ENCODE measurements at regions of chr10 and their contacts with region 1.

Region 1: DNA sequence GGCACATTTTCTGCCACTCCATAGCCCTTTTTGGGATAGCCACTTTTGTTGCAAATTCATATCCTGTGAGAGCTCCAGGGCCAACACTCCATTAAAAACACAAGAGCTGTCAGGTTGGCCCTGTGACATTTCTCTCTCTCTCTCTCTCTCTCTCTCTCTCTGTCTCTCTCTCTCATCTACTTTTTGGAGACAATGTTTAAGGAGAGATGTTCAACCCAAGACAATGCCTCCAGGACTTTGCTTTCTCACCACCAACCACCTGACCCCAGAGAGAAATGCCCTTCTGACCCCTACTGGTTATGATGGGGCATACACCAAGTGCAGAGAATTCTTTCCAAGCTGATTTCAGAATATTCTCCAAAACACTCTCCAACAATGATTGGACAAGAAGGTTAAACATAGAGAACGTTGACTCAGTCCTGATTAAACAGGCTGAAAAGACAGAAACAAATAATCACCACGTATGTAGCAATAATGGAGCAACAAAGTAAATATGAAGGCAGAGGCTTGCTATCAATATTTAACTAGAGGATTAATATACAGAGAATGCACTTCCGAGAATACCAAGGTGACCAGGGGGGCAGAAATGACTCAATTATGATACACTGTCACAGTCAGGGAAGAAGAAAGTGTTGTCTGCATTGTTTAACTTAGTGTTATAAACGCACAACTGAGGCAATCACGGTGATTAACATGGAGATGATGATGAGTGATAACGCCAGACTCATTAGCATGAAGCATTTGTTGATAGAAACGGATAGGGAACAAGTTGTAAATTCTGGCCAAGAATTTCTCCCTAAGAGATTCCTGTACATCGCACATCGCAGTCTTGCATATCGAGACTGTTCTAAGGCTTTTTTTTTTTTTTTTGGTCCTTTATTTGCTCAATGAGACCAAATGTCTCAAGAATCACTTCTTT is 178.5 kb downstream of the NRP1 start:
- DNase-seq: peak; percentile 53
- H3K4me3 Mint-ChIP-seq: no peak overlapping the region
- H3K27ac Mint-ChIP-seq: no peak overlapping the region
- H3K4me1 Mint-ChIP-seq: peaks cover 42% of the 10 kb centered on the region
- H3K27me3 Mint-ChIP-seq: peaks cover 11% of the 10 kb centered on the region

Region 2: DNA sequence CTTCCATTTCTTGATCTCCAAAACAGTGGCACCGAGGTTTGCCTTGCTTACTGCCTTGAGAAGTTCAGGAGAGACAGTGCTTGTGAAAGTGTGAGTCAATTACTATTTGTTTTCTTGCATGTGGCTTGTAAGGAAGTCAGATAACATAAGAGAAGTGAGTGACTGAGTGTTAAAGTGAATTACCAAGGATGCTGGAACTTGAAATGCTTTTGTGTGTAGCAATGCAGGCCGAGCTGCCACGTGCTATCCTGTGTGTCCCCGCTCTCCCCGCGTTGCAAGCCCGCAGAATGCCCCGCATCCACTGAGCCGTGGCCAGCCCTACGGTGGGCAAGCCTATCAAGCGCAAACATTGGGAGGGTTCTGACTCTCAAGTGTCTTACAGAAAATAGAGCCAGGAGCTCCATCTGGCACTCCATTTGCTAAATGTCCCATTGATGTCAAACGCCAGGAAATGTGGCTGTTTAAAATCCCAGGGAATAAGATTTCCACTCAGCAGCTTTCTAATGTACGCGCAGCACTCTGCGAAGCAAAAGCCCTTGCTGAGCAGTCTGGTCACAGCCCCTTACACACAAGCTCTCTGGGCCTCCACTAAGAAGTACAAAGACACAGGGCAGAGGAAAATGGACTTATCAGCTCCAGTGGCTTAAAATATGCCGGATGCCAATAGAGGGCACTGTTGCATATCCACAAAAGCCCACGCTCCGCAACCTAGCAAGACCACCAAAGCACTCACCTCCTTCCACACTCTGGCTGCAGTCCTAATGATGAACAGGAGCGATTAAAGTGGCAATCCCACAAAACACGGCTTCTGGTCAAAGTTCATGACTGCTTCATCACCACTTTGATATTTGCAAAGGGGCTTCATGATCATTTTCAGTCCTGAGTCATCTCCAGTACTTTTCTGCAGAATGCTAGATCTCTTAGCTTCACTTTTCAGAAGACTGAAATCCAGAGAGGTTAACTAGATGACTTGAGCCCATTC is 40.0 kb before region 1 on chr10:
- CTCF ChIA-PET with region 1: interaction called, 13 read pairs
- DNase-seq: no peak
- H3K4me3 Mint-ChIP-seq: no peak overlapping the region
- H3K27ac Mint-ChIP-seq: peak overlapping the region; percentile 78
- H3K4me1 Mint-ChIP-seq: peaks cover 77% of the 10 kb centered on the region
- H3K27me3 Mint-ChIP-seq: no peaks in the 10 kb centered on the region

Region 3: GRCh38 chr10:33134011-33134751 is 21.8 kb before region 1 on chr10:
- CTCF ChIA-PET with region 1: interaction called, 18 read pairs
- DNase-seq: peak; percentile 62
- H3K4me3 Mint-ChIP-seq: no peak overlapping the region
- H3K27ac Mint-ChIP-seq: peak overlapping the region; percentile 77
- H3K4me1 Mint-ChIP-seq: peaks cover 69% of the 10 kb centered on the region
- H3K27me3 Mint-ChIP-seq: peaks cover 3% of the 10 kb centered on the region

Region 4: DNA sequence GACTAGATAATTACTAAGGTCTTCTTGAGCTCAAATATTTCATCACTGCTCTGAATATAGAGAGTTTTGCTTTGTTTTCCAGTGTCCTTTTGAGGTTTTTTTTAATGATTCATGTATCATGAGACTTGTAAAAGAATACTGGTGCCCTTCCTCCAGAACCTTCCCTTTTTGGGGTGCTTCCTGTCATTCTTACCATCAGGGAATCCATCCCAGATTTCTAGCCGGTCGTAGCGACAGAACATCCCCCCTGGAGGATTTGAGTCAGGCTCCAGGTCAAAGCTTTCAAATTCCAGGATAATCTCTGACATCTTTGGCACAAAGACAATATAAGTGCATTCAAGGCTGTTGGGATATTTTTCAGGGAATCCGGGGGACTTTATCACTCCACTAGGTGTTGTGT is 107.5 kb after region 1 on chr10:
- CTCF ChIA-PET with region 1: no interaction called
- DNase-seq: no peak
- H3K4me3 Mint-ChIP-seq: no peak overlapping the region
- H3K27ac Mint-ChIP-seq: no peak overlapping the region
- H3K4me1 Mint-ChIP-seq: peaks cover 3% of the 10 kb centered on the region
- H3K27me3 Mint-ChIP-seq: peaks cover 13% of the 10 kb centered on the region

Measured in activated naive CD4-positive, alpha-beta T cell treated with anti-CD3 and anti-CD28 coated beads, Interleukin-2, amount 10 ng/mL, durations not matched to agents 7 days and 5 days (primary cell).